ENCODE measurements at regions of chr6 and their contacts with region 1.

Region 1: GRCh38 chr6:42928986-42929820 is at the start of gene CNPY3:
- DNase-seq: peak; percentile 97
- ATAC-seq: peak; percentile 75
- H3K4me3 ChIP-seq: peak within 1 kb of the TSS; percentile 86 to 89 (median 87)
- H3K4me3 Mint-ChIP-seq: peak within 1 kb of the TSS; percentile 100
- H3K27ac ChIP-seq: peak within 1 kb of the TSS; percentile 94 to 97
- H3K27ac Mint-ChIP-seq: peak within 1 kb of the TSS; percentile 100
- H3K4me1 ChIP-seq: peaks cover 44 to 49% of the 10 kb centered on the region in 2 donors
- H3K4me1 Mint-ChIP-seq: peaks cover 49% of the 10 kb centered on the region
- H3K27me3 ChIP-seq: no peaks in the 10 kb centered on the region
- H3K27me3 Mint-ChIP-seq: no peaks in the 10 kb centered on the region
- CTCF ChIP-seq: no peak
- total RNA-seq, gene CNPY3: 159 and 163 TPM in 2 replicates

Region 2: GRCh38 chr6:42735976-42736375 is 193.2 kb before region 1 on chr6:
- CTCF ChIA-PET with region 1: no interaction called
- POLR2A ChIA-PET with region 1: no interaction called
- intact Hi-C with region 1: no loop called
- DNase-seq: no peak
- ATAC-seq: no peak
- H3K4me3 ChIP-seq: no peak overlapping the region
- H3K4me3 Mint-ChIP-seq: no peak overlapping the region
- H3K27ac ChIP-seq: no peak overlapping the region
- H3K27ac Mint-ChIP-seq: no peak overlapping the region
- H3K4me1 ChIP-seq: no peaks in the 10 kb centered on the region
- H3K4me1 Mint-ChIP-seq: no peaks in the 10 kb centered on the region
- H3K27me3 ChIP-seq: no peaks in the 10 kb centered on the region
- H3K27me3 Mint-ChIP-seq: peaks cover 3% of the 10 kb centered on the region
- CTCF ChIP-seq: no peak

Region 3: GRCh38 chr6:42782622-42783176 is 146.5 kb before region 1 on chr6:
- CTCF ChIA-PET with region 1: no interaction called
- POLR2A ChIA-PET with region 1: interaction called, 26 read pairs
- intact Hi-C with region 1: loop called (anchors 2 kb)
- DNase-seq: peak; percentile 88
- ATAC-seq: peak; percentile 48
- H3K4me3 ChIP-seq: peak overlapping the region; percentile 55 to 99 (median 96)
- H3K4me3 Mint-ChIP-seq: peak overlapping the region; percentile 93
- H3K27ac ChIP-seq: peak overlapping the region; percentile 99 to 100
- H3K27ac Mint-ChIP-seq: peak overlapping the region; percentile 100
- H3K4me1 ChIP-seq: peaks cover 54 to 57% of the 10 kb centered on the region in 2 donors
- H3K4me1 Mint-ChIP-seq: peaks cover 41% of the 10 kb centered on the region
- H3K27me3 ChIP-seq: no peaks in the 10 kb centered on the region
- H3K27me3 Mint-ChIP-seq: no peaks in the 10 kb centered on the region
- CTCF ChIP-seq: no peak

Region 4: DNA sequence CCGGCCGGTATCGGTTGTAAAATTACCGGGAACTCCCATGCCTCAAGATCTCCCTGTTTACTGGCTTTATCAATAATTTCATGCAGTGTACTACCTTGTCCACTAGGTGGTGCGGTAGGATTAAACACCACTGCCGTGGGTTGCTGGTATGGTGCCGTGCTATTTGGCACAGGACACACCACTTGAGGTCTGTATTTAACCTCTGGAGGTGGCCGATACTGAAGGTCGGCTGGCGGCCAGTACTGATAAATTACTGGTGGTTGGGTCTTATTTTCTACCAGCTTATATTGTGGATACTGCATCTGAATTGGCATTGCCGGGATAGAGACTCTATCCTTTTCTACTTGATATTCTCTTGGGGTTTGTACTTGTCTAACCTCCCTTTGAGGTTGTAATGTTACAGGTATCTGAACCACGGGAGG is 27.7 kb before region 1 on chr6:
- CTCF ChIA-PET with region 1: interaction called, 6 read pairs
- POLR2A ChIA-PET with region 1: interaction called, 4 read pairs
- intact Hi-C with region 1: loop called (anchors 1 kb)
- DNase-seq: peak; percentile 88
- ATAC-seq: peak; percentile 99
- H3K4me3 ChIP-seq: no peak overlapping the region
- H3K4me3 Mint-ChIP-seq: no peak overlapping the region
- H3K27ac ChIP-seq: no peak overlapping the region
- H3K27ac Mint-ChIP-seq: no peak overlapping the region
- H3K4me1 ChIP-seq: peaks cover 5 to 8% of the 10 kb centered on the region in 2 donors
- H3K4me1 Mint-ChIP-seq: peaks cover 10% of the 10 kb centered on the region
- H3K27me3 ChIP-seq: no peaks in the 10 kb centered on the region
- H3K27me3 Mint-ChIP-seq: no peaks in the 10 kb centered on the region
- CTCF ChIP-seq: peak; percentile 93

Region 5: GRCh38 chr6:43013843-43014433 is 84.7 kb after region 1 on chr6 and contains the starts of genes KLHDC3 and MEA1:
- CTCF ChIA-PET with region 1: interaction called, 6 read pairs
- POLR2A ChIA-PET with region 1: interaction called, 22 read pairs
- intact Hi-C with region 1: loop called (anchors 1 kb)
- DNase-seq: peak; percentile 99
- ATAC-seq: peak; percentile 97
- H3K4me3 ChIP-seq: peak within 1 kb of the TSS; percentile 61 to 79 (median 70)
- H3K4me3 Mint-ChIP-seq: peak within 1 kb of the TSS; percentile 91
- H3K27ac ChIP-seq: peak within 1 kb of the TSS; percentile 35 to 69
- H3K27ac Mint-ChIP-seq: peak within 1 kb of the TSS; percentile 96
- H3K4me1 ChIP-seq: peaks cover 20 to 23% of the 10 kb centered on the region in 2 donors
- H3K4me1 Mint-ChIP-seq: peaks cover 50% of the 10 kb centered on the region
- H3K27me3 ChIP-seq: no peaks in the 10 kb centered on the region
- H3K27me3 Mint-ChIP-seq: no peaks in the 10 kb centered on the region
- CTCF ChIP-seq: no peak
- total RNA-seq, gene KLHDC3: 50.7 and 52.2 TPM in 2 replicates
- total RNA-seq, gene MEA1: 32.5 and 35.7 TPM in 2 replicates

Region 6: DNA sequence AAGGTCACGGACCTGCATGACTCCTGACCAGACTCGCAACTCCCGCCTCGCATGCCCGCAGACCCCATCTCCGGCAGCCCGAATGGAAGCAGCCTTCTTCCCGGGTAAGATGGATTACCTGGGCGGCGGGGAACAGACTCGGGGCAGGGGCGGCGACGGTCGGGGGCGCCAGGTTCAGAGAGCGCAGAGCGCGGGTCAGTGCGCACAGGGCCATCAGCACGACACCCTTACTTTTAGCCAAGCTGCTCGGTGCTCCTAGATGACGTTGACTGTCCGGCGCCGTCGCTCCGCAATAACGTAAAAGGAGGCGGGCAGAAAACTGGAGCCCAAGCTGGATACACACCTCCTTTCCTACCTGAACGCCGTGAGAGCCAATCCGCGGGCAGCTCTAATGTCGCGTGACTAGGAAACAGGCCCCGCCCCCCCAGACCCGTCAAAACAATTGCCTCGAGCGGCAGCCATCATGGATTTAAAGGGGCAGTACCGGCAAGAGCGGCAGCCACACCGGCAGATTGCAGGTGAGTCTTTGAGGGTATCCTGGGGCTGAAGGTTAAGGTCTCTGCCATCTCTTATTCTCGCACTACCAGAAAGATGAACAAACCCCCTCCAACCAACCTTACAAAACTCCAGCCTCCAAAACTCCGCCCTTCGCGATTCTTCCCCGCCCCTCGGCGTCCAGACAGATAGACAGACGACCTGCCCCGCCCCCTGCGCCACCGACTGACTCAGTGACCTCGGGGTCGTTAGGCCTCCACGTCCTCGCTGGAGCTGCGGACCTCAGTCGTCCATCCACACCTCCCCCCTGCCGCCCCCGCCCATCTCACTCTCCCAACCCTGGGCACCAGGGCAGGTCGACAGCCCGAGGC is 130.2 kb after region 1 on chr6 and contains the starts of genes KLC4 and MRPL2:
- CTCF ChIA-PET with region 1: no interaction called
- POLR2A ChIA-PET with region 1: interaction called, 11 read pairs
- intact Hi-C with region 1: loop called (anchors 1 kb)
- DNase-seq: peak; percentile 98
- ATAC-seq: peak; percentile 96
- H3K4me3 ChIP-seq: peak within 1 kb of the TSS; percentile 76 to 96 (median 89)
- H3K4me3 Mint-ChIP-seq: peak within 1 kb of the TSS; percentile 99
- H3K27ac ChIP-seq: peak within 1 kb of the TSS; percentile 76 to 86
- H3K27ac Mint-ChIP-seq: peak within 1 kb of the TSS; percentile 100
- H3K4me1 ChIP-seq: peaks cover 17 to 23% of the 10 kb centered on the region in 2 donors
- H3K4me1 Mint-ChIP-seq: peaks cover 38% of the 10 kb centered on the region
- H3K27me3 ChIP-seq: no peaks in the 10 kb centered on the region
- H3K27me3 Mint-ChIP-seq: no peaks in the 10 kb centered on the region
- CTCF ChIP-seq: no peak
- total RNA-seq, gene KLC4: 52.7 and 61.9 TPM in 2 replicates
- total RNA-seq, gene MRPL2: 43.8 and 45.6 TPM in 2 replicates

Region 7: GRCh38 chr6:43369174-43370022 is 440.2 kb after region 1 on chr6 and contains the start of gene ZNF318:
- CTCF ChIA-PET with region 1: no interaction called
- POLR2A ChIA-PET with region 1: no interaction called
- intact Hi-C with region 1: loop called (anchors 1 kb)
- DNase-seq: peak; percentile 98
- ATAC-seq: peak; percentile 90
- H3K4me3 ChIP-seq: peak within 1 kb of the TSS; percentile 83 to 95 (median 88)
- H3K4me3 Mint-ChIP-seq: peak within 1 kb of the TSS; percentile 98
- H3K27ac ChIP-seq: peak within 1 kb of the TSS; percentile 92 to 94
- H3K27ac Mint-ChIP-seq: peak within 1 kb of the TSS; percentile 97
- H3K4me1 ChIP-seq: peaks cover 64 to 69% of the 10 kb centered on the region in 2 donors
- H3K4me1 Mint-ChIP-seq: peaks cover 72% of the 10 kb centered on the region
- H3K27me3 ChIP-seq: no peaks in the 10 kb centered on the region
- H3K27me3 Mint-ChIP-seq: no peaks in the 10 kb centered on the region
- CTCF ChIP-seq: no peak
- total RNA-seq, gene ZNF318: 79.7 and 80.9 TPM in 2 replicates

Measured in B cell (primary cell).